ENCODE measurements at regions of chr7 and their contacts with region 1.

Region 1: DNA sequence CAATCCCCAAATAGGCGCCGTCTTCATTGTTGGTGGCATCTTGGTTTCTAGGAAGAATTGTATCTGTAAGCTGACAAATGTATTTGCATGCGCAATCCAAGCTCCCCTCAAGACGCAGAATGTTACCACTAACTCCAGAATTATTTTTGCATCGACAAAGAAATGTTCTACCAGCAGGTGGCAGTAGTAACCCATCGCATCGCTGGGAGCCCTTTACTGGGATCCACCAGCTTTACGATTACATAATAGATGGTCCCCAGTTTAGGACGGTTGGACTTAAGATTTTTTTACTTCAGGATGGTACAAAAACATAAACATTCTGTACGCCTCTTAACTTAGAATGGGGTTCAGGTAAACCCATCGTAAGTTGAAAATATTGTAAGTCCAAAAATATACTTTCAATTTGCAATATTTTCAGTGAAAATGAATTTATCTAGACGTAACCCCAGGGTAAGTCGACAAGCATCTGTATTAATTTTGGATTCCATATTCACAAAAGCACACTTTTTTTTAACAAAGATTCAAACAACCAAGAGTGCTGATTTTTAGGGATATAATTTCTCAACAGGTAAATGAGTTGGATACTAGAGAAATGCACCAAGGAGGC is 114.0 kb upstream of the COBL start:
- DNase-seq: peak; percentile 69
- ATAC-seq: 0 out of 2 replicates have a peak, but pooled peaks have one; percentile 43
- H3K4me3 Mint-ChIP-seq: no peak overlapping the region
- H3K27ac Mint-ChIP-seq: no peak overlapping the region
- H3K4me1 Mint-ChIP-seq: peaks cover 5% of the 10 kb centered on the region; the same call in 1 of the 2 replicates
- H3K27me3 Mint-ChIP-seq: no peaks in the 10 kb centered on the region
- CTCF ChIP-seq: peak; percentile 82

Region 2: GRCh38 chr7:51446356-51446755 is 15.8 kb after region 1 on chr7:
- CTCF ChIA-PET with region 1: interaction called, 31 read pairs
- POLR2A ChIA-PET with region 1: no interaction called
- DNase-seq: peak; percentile 62
- ATAC-seq: peak; percentile 83
- H3K4me3 Mint-ChIP-seq: peak overlapping the region; percentile 26
- H3K27ac Mint-ChIP-seq: peak overlapping the region; percentile 42
- H3K4me1 Mint-ChIP-seq: peaks cover 41% of the 10 kb centered on the region
- H3K27me3 Mint-ChIP-seq: peaks cover 13% of the 10 kb centered on the region
- CTCF ChIP-seq: no peak

Region 3: GRCh38 chr7:51455948-51456347 is 25.4 kb after region 1 on chr7:
- CTCF ChIA-PET with region 1: interaction called, 31 read pairs
- POLR2A ChIA-PET with region 1: no interaction called
- DNase-seq: peak; percentile 27
- ATAC-seq: 0 out of 2 replicates have a peak, but pooled peaks have one; percentile 6
- H3K4me3 Mint-ChIP-seq: no peak overlapping the region
- H3K27ac Mint-ChIP-seq: no peak overlapping the region
- H3K4me1 Mint-ChIP-seq: peaks cover 48% of the 10 kb centered on the region
- H3K27me3 Mint-ChIP-seq: peaks cover 11% of the 10 kb centered on the region
- CTCF ChIP-seq: no peak

Region 4: DNA sequence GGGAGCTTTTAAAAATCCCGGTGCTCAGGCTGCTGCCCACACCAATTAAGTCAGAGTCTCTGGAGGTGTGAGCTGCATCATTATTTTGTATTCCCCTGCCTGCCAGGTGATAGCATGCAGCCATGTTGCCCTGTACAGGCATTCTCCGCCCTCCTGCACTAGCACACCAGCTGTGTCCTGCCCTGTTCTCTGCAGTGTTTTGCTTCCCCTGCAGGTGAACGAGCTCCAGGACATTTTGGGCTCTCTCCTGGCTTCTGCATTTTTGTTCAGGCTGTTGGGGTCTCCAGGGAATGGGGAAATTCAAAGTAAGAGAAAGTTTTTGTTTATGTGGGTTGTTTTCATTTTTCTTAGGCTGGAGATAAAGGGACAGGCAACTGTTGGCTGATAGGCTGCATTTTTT is 157.0 kb after region 1 on chr7:
- CTCF ChIA-PET with region 1: interaction called, 19 read pairs
- POLR2A ChIA-PET with region 1: no interaction called
- DNase-seq: no peak
- ATAC-seq: peak; percentile 73
- H3K4me3 Mint-ChIP-seq: no peak overlapping the region
- H3K27ac Mint-ChIP-seq: no peak overlapping the region
- H3K4me1 Mint-ChIP-seq: peaks cover 21% of the 10 kb centered on the region
- H3K27me3 Mint-ChIP-seq: no peaks in the 10 kb centered on the region
- CTCF ChIP-seq: no peak

Region 5: DNA sequence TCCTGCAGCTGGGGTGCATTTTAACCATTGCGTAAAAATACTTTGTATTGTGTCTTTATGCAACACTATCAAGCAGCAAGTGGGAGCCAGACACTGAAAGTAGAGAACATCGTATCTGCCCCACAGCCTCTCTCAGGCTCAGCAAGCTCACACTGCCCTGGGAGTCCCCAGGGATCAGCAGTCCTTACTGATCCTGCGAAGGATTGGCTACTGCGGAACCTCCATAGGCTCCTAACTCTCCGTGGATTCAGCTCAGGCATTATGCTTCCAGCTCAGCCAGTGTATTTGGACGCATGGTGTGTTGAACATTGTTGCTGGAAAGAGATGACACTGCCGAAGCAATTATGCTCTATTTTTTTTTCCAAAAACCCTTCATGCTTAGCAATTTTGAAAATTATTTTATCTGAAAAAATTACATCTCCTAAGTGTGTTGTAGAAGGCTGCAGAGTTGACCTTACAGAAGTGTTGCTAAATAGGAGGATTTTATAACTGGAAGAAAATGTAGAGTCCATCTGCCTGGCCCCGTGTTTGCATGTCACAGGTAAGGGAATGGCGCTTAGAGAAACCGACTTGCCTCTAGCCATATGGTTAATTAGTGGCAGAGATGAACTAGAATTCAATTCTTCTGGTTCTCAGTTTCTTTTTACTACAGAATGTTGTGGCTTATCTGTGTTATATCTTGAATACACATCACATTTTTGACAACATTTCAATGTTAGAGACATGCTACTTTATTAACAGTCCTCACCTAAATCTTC is 162.4 kb after region 1 on chr7:
- CTCF ChIA-PET with region 1: interaction called, 19 read pairs
- POLR2A ChIA-PET with region 1: no interaction called
- DNase-seq: no peak
- ATAC-seq: no peak
- H3K4me3 Mint-ChIP-seq: no peak overlapping the region
- H3K27ac Mint-ChIP-seq: no peak overlapping the region
- H3K4me1 Mint-ChIP-seq: peaks cover 17% of the 10 kb centered on the region
- H3K27me3 Mint-ChIP-seq: no peaks in the 10 kb centered on the region; the same call in 1 of the 2 replicates
- CTCF ChIP-seq: no peak

Region 6: GRCh38 chr7:51731075-51731474 is 300.5 kb after region 1 on chr7:
- CTCF ChIA-PET with region 1: interaction called, 12 read pairs
- POLR2A ChIA-PET with region 1: no interaction called
- DNase-seq: no peak
- ATAC-seq: peak; percentile 91
- H3K4me3 Mint-ChIP-seq: peak overlapping the region; percentile 23; the same call in 1 of the 2 replicates
- H3K27ac Mint-ChIP-seq: no peak overlapping the region
- H3K4me1 Mint-ChIP-seq: peaks cover 30% of the 10 kb centered on the region
- H3K27me3 Mint-ChIP-seq: peaks cover 100% of the 10 kb centered on the region
- CTCF ChIP-seq: no peak

Measured in WTC11 (cell line).